Psoas muscle (tissue), 8 donors: ENCODE measurements at regions of chr10 and their contacts with region 1.

Region 1: GRCh38 chr10:74011770-74012169 is 13.9 kb downstream of the VCL start:
- DNase-seq: no peak
- ATAC-seq: peak in 3 of 4 donors; percentile 47 to 69 (median 61)
- H3K4me3 ChIP-seq: no peak overlapping the region
- H3K27ac ChIP-seq: peak overlapping the region; percentile 56
- H3K4me1 ChIP-seq: peaks cover 62% of the 10 kb centered on the region
- H3K27me3 ChIP-seq: no peaks in the 10 kb centered on the region
- CTCF ChIP-seq: no peak

Region 2: GRCh38 chr10:74035303-74035702 is 23.5 kb after region 1 on chr10:
- intact Hi-C with region 1: no loop called
- DNase-seq: no peak
- ATAC-seq: no peak
- H3K4me3 ChIP-seq: no peak overlapping the region
- H3K27ac ChIP-seq: peak overlapping the region; percentile 83
- H3K4me1 ChIP-seq: peaks cover 84% of the 10 kb centered on the region
- H3K27me3 ChIP-seq: no peaks in the 10 kb centered on the region
- CTCF ChIP-seq: peak; percentile 26

Region 3: GRCh38 chr10:74058658-74059057 is 46.9 kb after region 1 on chr10:
- intact Hi-C with region 1: loop called in 1 of 2 experiments (anchors 5 kb)
- DNase-seq: no peak
- ATAC-seq: peak; percentile 13 to 65 (median 42)
- H3K4me3 ChIP-seq: no peak overlapping the region
- H3K27ac ChIP-seq: peak overlapping the region; percentile 67
- H3K4me1 ChIP-seq: peaks cover 56% of the 10 kb centered on the region
- H3K27me3 ChIP-seq: no peaks in the 10 kb centered on the region
- CTCF ChIP-seq: peak; percentile 21

Region 4: DNA sequence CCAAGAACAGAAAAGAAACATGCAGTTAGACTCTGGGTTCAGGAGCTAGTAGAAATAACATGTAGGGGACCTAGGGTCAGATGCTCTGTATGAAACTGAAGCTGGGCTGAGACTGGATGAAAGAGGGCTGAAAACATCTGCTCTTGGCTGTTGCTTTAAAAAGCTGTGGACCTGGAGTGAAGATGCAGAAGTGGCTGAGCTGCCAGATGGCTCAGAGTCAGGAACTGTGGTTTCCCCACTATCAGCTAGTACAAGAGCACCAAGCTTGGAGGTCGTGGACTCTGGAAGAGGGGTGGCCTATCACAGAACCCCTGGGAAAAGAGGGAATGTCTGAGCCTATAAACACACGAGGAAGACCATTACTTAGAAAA is 145.1 kb after region 1 on chr10:
- intact Hi-C with region 1: no loop called
- DNase-seq: peak; percentile 34 to 61
- ATAC-seq: peak; percentile 39 to 70 (median 62)
- H3K4me3 ChIP-seq: no peak overlapping the region
- H3K27ac ChIP-seq: no peak overlapping the region
- H3K4me1 ChIP-seq: peaks cover 38% of the 10 kb centered on the region
- H3K27me3 ChIP-seq: no peaks in the 10 kb centered on the region
- CTCF ChIP-seq: no peak